Activated CD4-positive, alpha-beta memory T cell treated with anti-CD3 and anti-CD28 coated beads, Interleukin-2, amount 10 ng/mL, durations not matched to agents 7 days and 5 days (primary cell): ENCODE measurements at regions of chr5 and their contacts with region 1.

Region 1: GRCh38 chr5:76402886-76403765 is at the start of gene IQGAP2:
- DNase-seq: peak; percentile 86
- H3K4me3 Mint-ChIP-seq: peak within 1 kb of the TSS; percentile 93
- H3K27ac Mint-ChIP-seq: peak within 1 kb of the TSS; percentile 99
- H3K4me1 Mint-ChIP-seq: peaks cover 63% of the 10 kb centered on the region
- H3K27me3 Mint-ChIP-seq: no peaks in the 10 kb centered on the region
- total RNA-seq, gene IQGAP2: 118 to 124 TPM

Region 2: DNA sequence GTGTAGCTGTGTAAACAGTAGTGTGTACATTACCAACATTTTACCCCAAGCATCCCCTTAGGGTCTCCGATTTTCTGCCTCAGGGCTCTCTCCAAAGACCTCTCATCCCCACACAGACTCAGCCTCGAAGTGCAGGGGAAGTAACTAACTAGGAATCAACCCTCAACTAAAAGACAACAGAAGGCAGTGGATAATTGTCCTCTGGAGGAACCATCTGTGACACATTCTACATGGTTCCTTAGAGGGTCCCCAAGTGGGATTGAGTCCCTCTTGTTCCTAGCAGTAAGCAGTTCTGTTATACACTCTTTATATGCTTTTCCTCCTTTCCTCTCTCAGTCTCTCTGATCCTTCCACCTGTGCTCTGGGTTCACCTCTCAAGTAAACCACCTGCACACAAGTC is 162.8 kb before region 1 on chr5:
- CTCF ChIA-PET with region 1: no interaction called
- POLR2A ChIA-PET with region 1: no interaction called
- DNase-seq: no peak
- H3K4me3 Mint-ChIP-seq: no peak overlapping the region
- H3K27ac Mint-ChIP-seq: no peak overlapping the region
- H3K4me1 Mint-ChIP-seq: peaks cover 1% of the 10 kb centered on the region
- H3K27me3 Mint-ChIP-seq: peaks cover 11% of the 10 kb centered on the region

Region 3: DNA sequence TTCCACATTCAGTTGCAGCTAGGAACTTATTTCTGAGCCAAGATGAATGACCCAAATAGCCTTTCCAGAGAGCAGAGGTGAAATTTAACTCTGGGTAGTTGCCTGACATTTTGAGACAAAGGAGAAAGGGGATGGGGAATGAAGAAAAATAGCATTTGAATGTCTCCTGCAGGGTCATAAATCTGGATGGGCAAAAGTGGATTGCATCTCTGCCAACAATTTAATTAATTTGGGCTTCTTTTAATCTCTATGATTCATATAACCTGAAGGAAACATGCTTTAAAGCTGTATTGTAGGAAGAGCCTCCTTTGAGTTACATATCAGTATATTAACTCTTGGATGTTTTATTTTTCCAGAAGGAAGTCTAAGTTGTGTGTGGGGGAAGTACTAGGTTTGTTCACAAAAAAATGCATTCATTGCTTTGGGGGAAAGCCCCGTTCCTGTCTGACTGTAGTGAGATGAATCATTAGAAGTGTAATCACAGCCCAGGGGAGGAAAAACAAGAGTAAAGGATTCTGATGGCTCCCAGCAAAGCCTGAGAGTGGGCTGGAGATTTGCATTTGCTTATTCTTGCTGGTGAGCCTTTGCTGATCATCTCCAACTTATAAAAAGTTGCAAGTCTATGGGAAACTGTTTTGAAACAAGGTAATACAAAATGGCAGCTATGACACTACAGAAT is 133.1 kb before region 1 on chr5:
- CTCF ChIA-PET with region 1: interaction called, 8 read pairs
- POLR2A ChIA-PET with region 1: interaction called, 40 read pairs
- DNase-seq: peak; percentile 26
- H3K4me3 Mint-ChIP-seq: peak overlapping the region; percentile 53
- H3K27ac Mint-ChIP-seq: peak overlapping the region; percentile 88
- H3K4me1 Mint-ChIP-seq: peaks cover 37% of the 10 kb centered on the region
- H3K27me3 Mint-ChIP-seq: no peaks in the 10 kb centered on the region

Region 4: GRCh38 chr5:76325876-76326491 is 77.1 kb before region 1 on chr5:
- CTCF ChIA-PET with region 1: interaction called, 34 read pairs
- POLR2A ChIA-PET with region 1: interaction called, 209 read pairs
- DNase-seq: peak; percentile 79
- H3K4me3 Mint-ChIP-seq: peak overlapping the region; percentile 44
- H3K27ac Mint-ChIP-seq: peak overlapping the region; percentile 99
- H3K4me1 Mint-ChIP-seq: peaks cover 72% of the 10 kb centered on the region
- H3K27me3 Mint-ChIP-seq: no peaks in the 10 kb centered on the region

Region 5: GRCh38 chr5:76367623-76368371 is 35.3 kb before region 1 on chr5:
- CTCF ChIA-PET with region 1: no interaction called
- POLR2A ChIA-PET with region 1: no interaction called
- DNase-seq: no peak
- H3K4me3 Mint-ChIP-seq: no peak overlapping the region
- H3K27ac Mint-ChIP-seq: peak overlapping the region; percentile 23
- H3K4me1 Mint-ChIP-seq: peaks cover 19% of the 10 kb centered on the region
- H3K27me3 Mint-ChIP-seq: no peaks in the 10 kb centered on the region

Region 6: GRCh38 chr5:76386360-76386759 is 16.8 kb before region 1 on chr5:
- CTCF ChIA-PET with region 1: interaction called, 27 read pairs
- POLR2A ChIA-PET with region 1: interaction called, 55 read pairs
- DNase-seq: no peak
- H3K4me3 Mint-ChIP-seq: no peak overlapping the region
- H3K27ac Mint-ChIP-seq: no peak overlapping the region
- H3K4me1 Mint-ChIP-seq: peaks cover 39% of the 10 kb centered on the region
- H3K27me3 Mint-ChIP-seq: no peaks in the 10 kb centered on the region

Region 7: DNA sequence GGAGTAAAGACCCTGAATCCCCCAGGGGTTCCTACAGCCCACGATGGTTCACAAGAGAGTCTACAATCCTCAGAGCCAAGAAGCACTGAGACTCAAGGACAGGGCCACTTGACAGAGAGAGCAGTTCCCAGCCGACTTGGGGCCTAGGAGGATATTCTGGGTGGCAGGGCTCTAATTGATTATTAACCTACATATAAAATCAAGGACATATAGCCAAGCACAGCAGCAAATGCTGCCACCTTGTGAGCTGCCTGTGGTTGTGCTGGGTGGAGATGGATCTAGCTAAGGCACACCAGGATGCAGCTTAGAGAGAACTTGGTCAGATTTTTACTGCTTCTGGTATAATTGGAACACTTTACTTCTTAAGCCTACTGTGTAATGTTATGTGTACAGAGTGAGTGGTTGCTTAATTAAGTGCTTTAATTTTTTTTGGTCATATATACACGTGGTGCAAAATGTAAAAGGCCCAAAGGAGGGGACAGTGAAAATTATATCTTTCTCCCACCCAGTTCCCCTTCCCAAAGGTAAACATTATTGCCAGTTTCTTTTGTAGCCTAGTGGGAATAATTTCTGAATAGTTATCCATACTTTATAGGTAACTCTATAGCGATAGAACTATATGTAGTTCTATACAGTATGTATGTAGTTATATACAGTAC is 141.3 kb after region 1 on chr5:
- CTCF ChIA-PET with region 1: interaction called, 81 read pairs
- POLR2A ChIA-PET with region 1: interaction called, 156 read pairs
- DNase-seq: peak; percentile 73
- H3K4me3 Mint-ChIP-seq: peak overlapping the region; percentile 75
- H3K27ac Mint-ChIP-seq: peak overlapping the region; percentile 99
- H3K4me1 Mint-ChIP-seq: peaks cover 93% of the 10 kb centered on the region
- H3K27me3 Mint-ChIP-seq: no peaks in the 10 kb centered on the region